ENCODE measurements at regions of chr17 and their contacts with region 1.

Region 1: DNA sequence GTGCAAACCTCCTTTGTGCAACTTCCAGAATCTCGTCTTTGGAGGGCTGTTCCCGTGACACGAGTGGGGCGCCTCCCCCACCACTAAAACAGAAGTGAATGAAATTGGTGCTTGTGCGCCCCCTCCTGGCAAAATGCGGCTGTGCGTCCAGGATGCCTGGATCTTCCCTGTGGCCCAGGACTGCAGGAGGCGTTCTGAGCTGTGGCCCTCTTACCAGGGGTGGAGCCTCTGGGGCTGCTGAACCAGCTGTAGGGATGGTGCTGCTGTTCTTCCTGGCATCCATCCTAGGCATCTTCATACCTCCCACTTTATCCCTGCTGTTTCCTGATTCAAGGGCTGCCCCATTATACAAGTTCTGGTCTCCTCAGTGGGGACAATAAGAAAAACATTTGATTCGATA is 18.5 kb upstream of the NAGLU start:
- DNase-seq: peak; percentile 73
- H3K4me3 Mint-ChIP-seq: no peak overlapping the region
- H3K27ac Mint-ChIP-seq: no peak overlapping the region
- H3K4me1 Mint-ChIP-seq: no peaks in the 10 kb centered on the region
- H3K27me3 Mint-ChIP-seq: peaks cover 8% of the 10 kb centered on the region

Region 2: DNA sequence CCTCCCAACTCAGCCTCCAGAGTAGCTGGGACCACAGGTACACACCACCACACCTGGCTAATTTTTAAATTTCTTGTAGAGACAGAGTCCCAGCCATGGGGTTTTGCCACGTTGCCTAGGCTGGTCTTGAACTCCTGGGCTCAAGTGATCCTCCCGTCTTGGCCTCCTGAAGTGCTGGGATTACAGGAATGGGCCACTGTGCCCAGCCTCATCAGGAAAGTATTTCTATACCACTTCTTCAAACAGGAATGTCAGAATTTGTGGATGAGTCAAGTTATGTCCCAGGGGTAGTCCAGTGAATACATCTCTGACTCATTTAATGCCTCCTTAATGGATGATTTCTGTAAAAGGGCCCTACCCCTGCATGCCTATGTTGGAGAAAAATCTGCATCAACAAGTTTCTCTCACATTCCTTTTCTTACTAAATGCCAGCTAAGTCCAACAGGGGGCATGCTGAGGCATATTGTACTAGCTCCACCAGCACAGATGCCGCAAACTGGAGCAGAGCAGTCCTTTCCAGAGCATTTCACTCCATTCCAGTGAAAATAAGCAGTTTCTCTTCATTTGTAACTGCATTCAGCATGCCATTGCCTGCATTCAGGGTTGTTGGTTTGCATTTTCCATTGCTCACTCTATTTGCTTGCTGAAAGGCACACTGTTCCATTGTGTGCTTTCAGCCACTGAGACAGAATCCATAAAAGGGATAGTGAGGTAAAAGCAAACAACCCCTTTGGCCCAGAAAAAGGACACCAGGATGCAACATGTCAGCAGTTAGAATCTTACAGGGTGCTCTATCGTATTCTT is 89.2 kb before region 1 on chr17:
- intact Hi-C with region 1: loop called (anchors 2 kb)
- DNase-seq: no peak
- H3K4me3 Mint-ChIP-seq: no peak overlapping the region
- H3K27ac Mint-ChIP-seq: no peak overlapping the region
- H3K4me1 Mint-ChIP-seq: no peaks in the 10 kb centered on the region
- H3K27me3 Mint-ChIP-seq: peaks cover 43% of the 10 kb centered on the region

Region 3: DNA sequence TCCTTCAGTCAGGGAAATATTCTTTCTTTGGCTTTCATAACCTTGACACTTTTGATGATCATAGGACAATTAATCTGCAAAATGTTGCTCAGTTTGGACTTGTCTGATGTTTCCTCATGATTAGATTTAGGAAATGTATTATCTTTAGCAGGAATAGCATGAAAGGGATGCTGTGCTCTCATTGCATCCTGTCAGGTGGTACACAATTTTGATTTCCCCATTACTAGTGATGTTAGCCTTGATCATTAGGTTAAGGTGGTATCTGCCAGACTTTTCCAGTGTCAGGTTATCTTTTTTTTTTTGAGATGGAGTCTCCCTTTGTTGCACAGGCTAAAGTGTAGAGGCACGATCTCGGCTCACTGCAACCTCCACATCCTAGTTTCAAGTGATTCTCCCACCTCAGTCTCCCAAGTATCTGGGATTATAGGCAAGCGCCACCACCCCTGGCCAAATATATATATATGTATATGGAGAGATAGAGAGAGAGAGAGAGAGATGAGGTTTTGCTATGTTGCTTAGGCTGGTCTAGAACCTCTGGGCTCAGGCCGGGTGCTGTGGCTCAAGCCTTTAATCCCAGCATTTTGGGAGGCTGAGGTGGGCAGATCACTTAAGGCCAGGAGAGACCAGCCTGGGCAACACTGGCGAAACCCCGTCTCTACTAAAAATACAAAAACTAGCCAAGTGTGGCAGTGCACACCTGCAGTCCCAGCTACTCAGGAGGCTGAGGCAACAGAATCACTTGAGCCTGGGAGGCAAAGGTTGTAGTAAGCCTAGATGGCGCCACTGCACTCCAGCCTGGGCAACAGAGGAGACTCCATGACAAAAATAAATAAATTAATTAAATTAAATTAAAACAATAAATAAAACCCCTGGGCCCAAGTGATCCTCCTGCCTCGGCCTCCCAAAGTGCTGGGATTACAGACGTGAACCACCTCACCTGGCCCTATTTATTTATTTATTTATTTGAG is 78.6 kb before region 1 on chr17:
- intact Hi-C with region 1: loop called (anchors 2 kb)
- DNase-seq: no peak
- H3K4me3 Mint-ChIP-seq: no peak overlapping the region
- H3K27ac Mint-ChIP-seq: no peak overlapping the region
- H3K4me1 Mint-ChIP-seq: peaks cover 10% of the 10 kb centered on the region
- H3K27me3 Mint-ChIP-seq: peaks cover 16% of the 10 kb centered on the region

Region 4: GRCh38 chr17:42459801-42460281 is 57.7 kb before region 1 on chr17:
- intact Hi-C with region 1: loop called (anchors 5 kb)
- DNase-seq: peak; percentile 23
- H3K4me3 Mint-ChIP-seq: peak overlapping the region; percentile 87
- H3K27ac Mint-ChIP-seq: peak overlapping the region; percentile 59
- H3K4me1 Mint-ChIP-seq: peaks cover 38% of the 10 kb centered on the region
- H3K27me3 Mint-ChIP-seq: peaks cover 10% of the 10 kb centered on the region

Region 5: DNA sequence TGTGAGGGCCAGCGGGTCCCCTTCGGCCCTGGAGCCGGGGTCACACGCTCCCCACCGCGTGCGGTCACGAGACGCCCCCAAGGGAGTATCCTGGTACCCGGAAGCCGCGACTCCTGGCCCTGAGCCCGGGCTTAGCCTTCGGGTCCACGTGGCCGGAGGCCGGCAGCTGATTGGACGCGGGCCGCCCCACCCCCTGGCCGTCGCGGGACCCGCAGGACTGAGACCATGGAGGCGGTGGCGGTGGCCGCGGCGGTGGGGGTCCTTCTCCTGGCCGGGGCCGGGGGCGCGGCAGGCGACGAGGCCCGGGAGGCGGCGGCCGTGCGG is 18.5 kb after region 1 on chr17 and contains the start of gene NAGLU:
- intact Hi-C with region 1: no loop called
- DNase-seq: peak; percentile 85
- H3K4me3 Mint-ChIP-seq: peak within 1 kb of the TSS; percentile 88
- H3K27ac Mint-ChIP-seq: peak within 1 kb of the TSS; percentile 89
- H3K4me1 Mint-ChIP-seq: peaks cover 27% of the 10 kb centered on the region
- H3K27me3 Mint-ChIP-seq: peaks cover 8% of the 10 kb centered on the region
- total RNA-seq, gene NAGLU: 17.4 and 19.9 TPM in 2 replicates

Region 6: DNA sequence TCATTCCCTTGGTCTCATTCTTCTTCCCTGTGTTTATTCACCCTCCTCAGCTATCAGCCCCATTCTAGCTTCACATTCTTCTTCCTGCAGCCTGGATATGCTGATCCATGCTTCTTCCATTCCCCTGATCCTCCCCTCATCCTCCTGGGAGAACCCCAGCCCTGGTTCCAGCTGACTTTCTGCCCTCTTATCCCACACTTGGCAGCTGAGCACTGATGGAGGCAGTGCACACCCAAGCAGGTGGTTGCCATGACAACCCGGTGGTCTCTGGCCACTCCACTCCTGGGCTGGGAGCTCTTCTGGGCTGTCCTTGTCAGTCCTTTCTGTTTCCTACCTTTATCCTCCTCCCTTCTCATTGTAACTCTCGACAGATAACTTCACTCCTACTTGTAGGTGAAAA is 124.8 kb after region 1 on chr17:
- intact Hi-C with region 1: no loop called
- DNase-seq: no peak
- H3K4me3 Mint-ChIP-seq: no peak overlapping the region
- H3K27ac Mint-ChIP-seq: no peak overlapping the region
- H3K4me1 Mint-ChIP-seq: no peaks in the 10 kb centered on the region
- H3K27me3 Mint-ChIP-seq: peaks cover 14% of the 10 kb centered on the region

Measured in activated T-helper 2 cell treated with anti-CD3 and anti-CD28 coated beads, Interferon-gamma antibody, Interleukin-2, Interleukin-4, amounts not matched to agents 10 μg/mL and 5 μg/mL and 100 μg/mL, durations not matched to agents 14 hours and 24 hours and 36 hours (primary cell).